Ascending aorta (tissue), 2 donors: ENCODE measurements at regions of chr11 and their contacts with region 1.

Region 1: DNA sequence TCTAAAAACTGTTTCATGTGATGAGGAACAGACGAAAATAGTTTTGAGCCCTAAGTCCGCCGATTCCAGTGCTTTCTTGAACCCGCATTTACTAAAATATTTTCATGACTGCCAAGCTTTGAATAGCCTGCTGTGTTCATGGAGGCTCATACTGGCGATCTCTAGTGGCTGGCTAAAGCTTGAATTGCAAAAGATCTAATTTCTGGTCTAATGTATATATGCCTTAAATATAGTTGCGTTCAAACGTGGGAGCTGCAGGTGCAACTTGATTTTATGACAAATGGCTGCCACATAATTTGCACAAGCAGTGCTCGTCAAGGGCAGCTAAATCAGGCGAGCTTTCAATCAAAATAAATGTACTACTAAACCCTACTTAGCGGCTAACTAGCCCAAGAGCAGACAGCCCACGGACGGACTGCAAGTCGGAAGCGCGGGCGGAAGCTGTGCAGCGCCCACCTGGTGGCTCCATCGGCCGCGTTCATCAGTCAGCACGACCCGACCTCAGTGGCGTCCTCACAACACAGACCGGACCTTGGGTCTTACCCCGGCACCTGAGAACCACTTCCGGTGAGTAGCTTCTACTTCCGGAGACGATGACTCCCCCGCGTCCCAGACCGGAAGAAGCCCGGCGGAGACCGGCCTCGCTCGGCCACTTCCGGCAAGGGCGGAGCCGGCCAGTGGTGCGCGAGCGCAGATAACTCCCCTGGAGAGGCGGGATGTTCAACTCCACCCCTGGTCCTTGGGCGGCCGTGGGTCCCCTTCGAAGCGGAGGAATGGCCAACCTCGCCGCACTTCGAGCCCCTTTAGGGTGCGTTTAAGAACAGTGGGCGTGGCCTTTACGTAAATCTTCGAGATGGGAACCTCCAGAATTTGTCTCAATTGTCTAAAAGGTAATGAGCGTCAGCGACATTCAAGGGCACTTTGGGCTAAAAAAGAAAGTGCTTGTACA is 6.1 kb downstream of the RPL27A start:
- DNase-seq: peak; percentile 55 to 97
- H3K4me3 ChIP-seq: peak overlapping the region; percentile 54 to 60
- H3K27ac ChIP-seq: peak overlapping the region; percentile 59 to 77
- H3K4me1 ChIP-seq: peaks cover 5 to 25% of the 10 kb centered on the region in 2 donors
- H3K27me3 ChIP-seq: no peaks in the 10 kb centered on the region
- CTCF ChIP-seq: peak; percentile 9 to 35 (median 20)

Region 2: DNA sequence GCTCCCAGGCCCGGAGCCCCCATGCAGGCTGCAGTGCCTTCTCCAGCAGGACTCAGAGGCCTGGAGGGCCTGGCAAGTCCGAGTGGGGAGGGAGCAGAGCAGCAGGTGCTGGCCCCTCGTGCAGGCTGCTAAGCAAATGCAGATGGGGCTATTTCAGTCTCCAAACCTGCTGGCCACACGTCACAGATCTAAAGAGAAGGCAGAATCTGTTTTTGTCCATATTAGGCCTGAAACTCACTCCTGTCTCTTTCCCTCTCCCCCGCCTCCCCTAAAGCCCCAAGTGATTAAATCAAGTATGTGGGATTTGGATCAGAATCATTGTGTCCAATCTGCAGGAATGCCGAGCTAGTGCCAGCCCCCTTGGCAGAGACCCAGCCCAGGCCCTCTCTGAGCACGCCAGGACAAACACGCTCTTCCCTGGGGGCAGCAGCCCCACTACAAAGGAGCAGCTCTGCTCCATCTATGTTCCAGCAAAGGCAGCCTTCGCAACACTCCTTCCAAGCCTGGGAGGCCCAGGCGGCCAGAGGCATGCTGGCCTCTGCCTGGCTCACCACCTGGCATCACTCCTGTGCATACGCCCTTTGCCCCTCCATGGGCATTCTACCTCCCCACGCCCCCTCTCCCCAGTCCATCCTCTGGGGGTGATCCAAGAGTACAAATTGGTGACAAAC is 20.4 kb after region 1 on chr11:
- intact Hi-C with region 1: loop called (anchors 1 kb)
- DNase-seq: peak; percentile 70 to 98
- H3K4me3 ChIP-seq: no peak overlapping the region
- H3K27ac ChIP-seq: peak overlapping the region; percentile 89 to 99
- H3K4me1 ChIP-seq: peaks cover 17 to 32% of the 10 kb centered on the region in 2 donors
- H3K27me3 ChIP-seq: no peaks in the 10 kb centered on the region
- CTCF ChIP-seq: no peak

Region 3: GRCh38 chr11:8768625-8769333 is 80.1 kb after region 1 on chr11:
- intact Hi-C with region 1: loop called (anchors 1 kb)
- DNase-seq: peak; percentile 23 to 82
- H3K4me3 ChIP-seq: no peak overlapping the region
- H3K27ac ChIP-seq: peak overlapping the region; percentile 61 to 80
- H3K4me1 ChIP-seq: peaks cover 18 to 65% of the 10 kb centered on the region in 2 donors
- H3K27me3 ChIP-seq: no peaks in the 10 kb centered on the region
- CTCF ChIP-seq: peak in 2 of 3 experiments; percentile 39 to 54

Region 4: GRCh38 chr11:8870411-8871170 is 181.9 kb after region 1 on chr11:
- intact Hi-C with region 1: loop called (anchors 5 kb)
- DNase-seq: peak in 1 of 2 donors; percentile 64
- H3K4me3 ChIP-seq: peak overlapping the region; percentile 75 to 90
- H3K27ac ChIP-seq: peak overlapping the region; percentile 36 to 70
- H3K4me1 ChIP-seq: peaks cover 0 to 2% of the 10 kb centered on the region in 2 donors
- H3K27me3 ChIP-seq: no peaks in the 10 kb centered on the region
- CTCF ChIP-seq: no peak